ENCODE measurements at regions of chr9 and their contacts with region 1.

Region 1: DNA sequence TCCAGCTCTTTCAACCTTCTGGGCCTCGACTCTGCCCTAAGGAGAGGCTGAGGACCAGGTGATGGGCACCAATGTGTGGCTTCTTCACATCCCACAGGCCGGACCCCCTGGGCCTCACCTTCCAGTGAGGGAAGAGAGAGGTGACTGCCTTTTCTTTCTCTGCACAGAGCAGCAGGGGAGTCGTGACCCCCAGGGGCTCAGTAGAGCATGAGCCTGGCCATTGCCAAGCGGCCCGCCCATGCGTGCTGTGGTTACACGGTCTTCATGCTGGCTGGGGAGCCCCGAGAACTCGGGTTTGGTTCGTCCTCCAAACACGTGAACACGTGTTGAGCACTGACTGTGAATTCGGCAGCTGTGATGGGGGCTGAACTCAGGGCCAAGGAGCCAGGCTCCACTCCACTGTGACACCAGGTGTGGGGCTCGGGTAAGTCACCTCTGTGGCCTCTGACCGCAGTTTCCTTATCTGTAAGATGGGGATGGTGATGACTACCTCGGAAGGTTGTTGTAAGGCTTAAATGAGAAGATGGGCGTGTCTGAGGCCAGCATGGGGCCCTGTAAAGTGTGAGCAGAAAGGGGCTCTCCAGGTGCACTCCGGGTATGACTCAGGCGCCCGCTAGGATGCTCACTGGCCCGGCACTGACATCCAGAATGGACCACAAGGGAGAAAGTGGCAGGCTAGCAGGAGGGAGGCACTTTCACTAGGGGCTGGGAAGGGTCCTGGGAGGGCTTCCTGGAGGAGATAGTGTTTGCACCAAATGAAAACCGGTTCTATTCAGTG is 13.4 kb upstream of the GRHPR start:
- DNase-seq: no peak
- H3K4me3 ChIP-seq: no peak overlapping the region
- H3K27ac ChIP-seq: no peak overlapping the region
- H3K27me3 ChIP-seq: no peaks in the 10 kb centered on the region
- CTCF ChIP-seq: no peak

Region 2: GRCh38 chr9:36625006-36625615 is 784.0 kb before region 1 on chr9:
- intact Hi-C with region 1: loop called in 1 of 2 experiments (anchors 10 kb)
- DNase-seq: peak in 9 of 10 donors; percentile 24 to 61 (median 54)
- H3K4me3 ChIP-seq: no peak overlapping the region
- H3K27ac ChIP-seq: peak overlapping the region in 3 of 59 donors; percentile 13 to 36 (median 13)
- H3K27me3 ChIP-seq: no peaks in the 10 kb centered on the region
- CTCF ChIP-seq: no peak

Region 3: GRCh38 chr9:37350486-37351190 is 58.5 kb before region 1 on chr9:
- intact Hi-C with region 1: loop called in 1 of 2 experiments (anchors 10 kb)
- DNase-seq: no peak
- H3K4me3 ChIP-seq: no peak overlapping the region
- H3K27ac ChIP-seq: no peak overlapping the region
- H3K27me3 ChIP-seq: no peaks in the 10 kb centered on the region
- CTCF ChIP-seq: no peak

Region 4: GRCh38 chr9:37465249-37466036 is 56.3 kb after region 1 on chr9 and contains the start of gene ZBTB5:
- intact Hi-C with region 1: no loop called
- DNase-seq: peak; percentile 99 to 100 (median 99)
- H3K4me3 ChIP-seq: peak within 1 kb of the TSS; percentile 68 to 100 (median 95)
- H3K27ac ChIP-seq: peak within 1 kb of the TSS; percentile 55 to 99 (median 93)
- H3K27me3 ChIP-seq: no peaks in the 10 kb centered on the region
- CTCF ChIP-seq: peak in 12 of 56 donors; percentile 1 to 27 (median 13)
- total RNA-seq, gene ZBTB5: 6.8 to 16.0 (median 10.0) TPM

Measured in dorsolateral prefrontal cortex (tissue), 120 donors.